Pancreas (tissue), 10 donors: ENCODE measurements at regions of chr11 and their contacts with region 1.

Region 1: DNA sequence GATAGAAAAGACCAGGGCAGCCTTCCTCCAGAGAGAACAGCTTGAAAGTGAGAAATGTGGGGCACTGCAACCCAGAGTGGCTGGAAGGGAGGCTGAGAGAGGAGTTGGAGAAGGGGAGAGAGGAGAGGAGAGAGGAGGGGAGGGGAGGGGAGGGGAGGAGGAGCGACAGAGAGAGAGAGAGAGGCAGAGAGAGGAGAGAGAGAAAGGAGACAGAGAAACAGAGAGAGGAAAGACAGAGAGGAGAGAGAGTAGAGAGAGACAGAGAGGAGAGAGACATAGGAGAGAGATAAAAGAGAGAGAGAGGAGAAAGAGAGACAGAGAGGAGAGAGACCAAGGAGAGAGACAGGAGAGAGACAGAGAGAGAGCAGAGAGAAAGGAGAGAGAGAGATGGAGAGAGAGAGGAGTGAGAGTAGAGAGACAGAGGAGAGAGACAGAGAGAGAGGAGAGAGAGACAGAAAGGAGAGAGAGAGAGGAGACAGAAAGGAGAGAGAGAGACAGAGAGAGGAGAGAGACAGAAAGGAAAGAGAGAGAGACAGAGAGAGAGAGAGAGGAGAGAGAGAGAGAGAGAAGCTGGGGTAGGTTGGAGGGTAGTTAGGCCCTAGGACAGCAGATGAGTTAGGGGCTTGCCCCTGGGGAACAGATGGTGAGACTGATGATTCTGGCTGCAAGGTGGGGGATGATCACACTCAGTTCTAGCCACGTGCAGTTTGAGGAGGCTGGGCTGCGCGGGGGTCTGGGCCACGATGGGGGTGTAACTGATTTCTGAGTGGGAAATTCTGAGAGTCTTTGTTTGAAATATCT is 8.5 kb upstream of the SCYL1 start:
- DNase-seq: peak in 2 of 6 donors; percentile 13 to 33
- ATAC-seq: peak in 1 of 4 donors; percentile 21
- H3K4me3 ChIP-seq: no peak overlapping the region
- H3K27ac ChIP-seq: no peak overlapping the region
- H3K4me1 ChIP-seq: no peaks in the 10 kb centered on the region
- H3K27me3 ChIP-seq: no peaks in the 10 kb centered on the region
- CTCF ChIP-seq: no peak

Region 2: GRCh38 chr11:65354265-65355012 is 161.9 kb before region 1 on chr11 and contains the start of gene TIGD3:
- intact Hi-C with region 1: loop called in 1 of 3 experiments (anchors 5 kb)
- DNase-seq: peak; percentile 97 to 99 (median 98)
- ATAC-seq: peak; percentile 94 to 96 (median 96)
- H3K4me3 ChIP-seq: peak within 1 kb of the TSS; percentile 52 to 88 (median 70)
- H3K27ac ChIP-seq: peak within 1 kb of the TSS in 3 of 4 donors; percentile 23 to 56 (median 29)
- H3K4me1 ChIP-seq: peaks cover 0 to 8% (median 5%) of the 10 kb centered on the region in 3 donors
- H3K27me3 ChIP-seq: no peaks in the 10 kb centered on the region
- CTCF ChIP-seq: no peak
- total RNA-seq, gene TIGD3: 0.06 to 0.16 (median 0.13) TPM in 4 of 6 donors, not detected in the others

Region 3: GRCh38 chr11:65366340-65366773 is 150.0 kb before region 1 on chr11:
- intact Hi-C with region 1: loop called in 1 of 3 experiments (anchors 10 kb)
- DNase-seq: peak in 3 of 6 donors; percentile 63 to 74 (median 65)
- ATAC-seq: peak; percentile 71 to 86 (median 86)
- H3K4me3 ChIP-seq: no peak overlapping the region
- H3K27ac ChIP-seq: peak overlapping the region; percentile 3 to 69 (median 42)
- H3K4me1 ChIP-seq: peaks cover 16 to 26% (median 21%) of the 10 kb centered on the region in 3 donors
- H3K27me3 ChIP-seq: no peaks in the 10 kb centered on the region
- CTCF ChIP-seq: peak; percentile 51 to 74 (median 61)